Naive thymus-derived CD8-positive, alpha-beta T cell (primary cell): ENCODE measurements at regions of chr14 and their contacts with region 1.

Region 1: DNA sequence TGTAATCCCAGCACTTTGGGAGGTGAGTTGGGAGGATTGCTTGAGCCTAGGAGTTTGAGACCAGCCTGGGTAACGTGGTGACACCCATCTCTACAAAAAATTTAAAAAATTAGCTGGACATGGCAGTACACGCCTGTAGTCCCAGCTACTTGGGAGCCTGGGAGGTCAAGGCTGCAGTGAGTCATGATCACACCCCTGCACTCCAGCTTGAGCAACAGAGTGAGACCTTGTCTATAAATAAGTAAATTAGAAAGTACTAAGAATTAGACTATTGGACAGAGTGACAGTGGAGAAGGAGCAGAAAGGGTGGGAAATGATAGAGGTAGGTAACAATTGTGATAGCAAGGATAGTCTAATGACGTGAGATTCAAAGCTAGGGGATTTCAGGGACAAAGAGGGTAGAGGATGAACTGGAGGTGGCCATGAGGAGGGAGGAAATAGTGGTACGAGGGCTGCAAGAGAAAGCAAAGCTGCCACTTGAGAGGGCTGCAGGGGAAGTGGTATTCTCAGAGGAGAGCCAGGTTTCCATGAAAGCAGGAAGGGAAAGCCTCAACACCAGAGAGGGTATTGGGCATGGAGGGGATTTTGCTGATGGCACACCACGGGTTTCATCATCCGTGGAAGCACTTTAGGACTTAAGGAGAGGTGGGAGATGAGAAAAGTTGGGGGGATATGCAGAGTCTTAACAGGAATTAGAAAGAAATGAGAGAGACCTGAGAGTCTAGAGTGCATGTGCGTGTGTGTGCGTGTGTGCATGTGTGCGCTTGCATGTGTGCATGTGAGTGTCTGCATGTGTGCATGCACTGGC is 85.6 kb downstream of the SYNE2 start:
- DNase-seq: peak in 4 of 10 donors; percentile 25 to 35 (median 26)
- ATAC-seq: peak; percentile 41 to 72
- H3K4me3 Mint-ChIP-seq: no peak overlapping the region
- H3K27ac Mint-ChIP-seq: no peak overlapping the region
- H3K4me1 Mint-ChIP-seq: peaks cover 12 to 38% (median 20%) of the 10 kb centered on the region in 4 donors
- H3K27me3 Mint-ChIP-seq: no peaks in the 10 kb centered on the region

Region 2: DNA sequence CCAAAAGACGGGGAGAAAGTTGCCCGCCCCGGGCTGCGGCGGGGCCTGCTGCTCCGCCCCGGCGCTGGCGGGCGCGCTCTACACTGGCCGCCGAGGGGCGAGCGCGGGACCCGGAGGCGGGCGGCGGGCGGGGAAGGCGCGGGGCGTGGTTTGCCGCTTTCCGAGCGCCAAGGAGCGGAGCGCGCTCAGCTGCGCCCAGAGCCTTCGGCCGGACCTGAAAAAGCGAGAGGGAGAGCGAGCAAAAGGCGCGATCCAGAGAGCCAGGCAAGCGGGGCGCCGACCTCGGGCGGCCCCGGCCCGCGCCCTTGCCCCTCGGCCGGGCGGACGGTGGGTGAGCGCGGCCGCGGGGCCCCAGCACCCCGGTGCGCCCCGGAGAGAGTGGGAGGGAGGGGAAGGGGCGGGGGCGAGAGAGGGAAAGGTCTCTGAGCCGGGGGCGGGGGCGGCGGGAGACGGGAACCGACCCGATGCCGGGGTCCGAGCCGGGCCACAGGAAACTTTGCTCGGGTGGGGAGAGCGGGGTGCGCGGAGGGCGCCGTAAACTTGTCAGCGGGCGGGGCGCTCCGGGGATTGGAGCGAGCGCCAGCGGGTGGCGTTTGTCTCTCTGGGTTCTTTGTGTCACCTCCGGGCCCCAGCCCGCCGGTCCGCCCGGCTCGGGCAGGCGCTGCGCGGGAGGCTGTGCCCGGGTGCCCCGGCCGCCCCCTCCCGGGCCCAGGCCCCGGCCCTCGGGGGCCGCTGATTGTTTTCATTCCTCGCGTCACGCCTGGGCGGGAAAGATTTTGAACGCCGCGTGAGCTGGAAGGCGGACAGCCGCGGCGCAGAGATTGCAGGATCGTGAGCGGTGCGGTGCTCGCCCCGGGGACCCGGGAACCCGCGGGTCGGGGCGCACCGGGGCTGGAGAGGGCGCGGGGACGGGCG is 85.3 kb before region 1 on chr14 and contains the start of gene SYNE2:
- POLR2A ChIA-PET with region 1: interaction called, 30 read pairs
- DNase-seq: peak; percentile 65 to 85 (median 80)
- ATAC-seq: peak; percentile 80 to 84
- H3K4me3 Mint-ChIP-seq: peak within 1 kb of the TSS; percentile 93 to 99 (median 96)
- H3K27ac Mint-ChIP-seq: peak within 1 kb of the TSS; percentile 86 to 97 (median 95)
- H3K4me1 Mint-ChIP-seq: peaks cover 20 to 40% (median 38%) of the 10 kb centered on the region in 4 donors
- H3K27me3 Mint-ChIP-seq: no peaks in the 10 kb centered on the region
- polyA plus RNA-seq, gene SYNE2: 15.7 to 25.9 (median 16.1) TPM

Region 3: GRCh38 chr14:63867933-63868921 is 70.2 kb before region 1 on chr14:
- POLR2A ChIA-PET with region 1: interaction called, 10 read pairs
- DNase-seq: peak in 3 of 10 donors; percentile 16 to 65 (median 33)
- ATAC-seq: no peak
- H3K4me3 Mint-ChIP-seq: peak overlapping the region in 9 of 10 donors; percentile 65 to 76 (median 72)
- H3K27ac Mint-ChIP-seq: peak overlapping the region; percentile 53 to 99 (median 93)
- H3K4me1 Mint-ChIP-seq: peaks cover 19 to 79% (median 61%) of the 10 kb centered on the region in 4 donors
- H3K27me3 Mint-ChIP-seq: no peaks in the 10 kb centered on the region